MCF 10A (cell line): ENCODE measurements at regions of chr3 and their contacts with region 1.

Region 1: DNA sequence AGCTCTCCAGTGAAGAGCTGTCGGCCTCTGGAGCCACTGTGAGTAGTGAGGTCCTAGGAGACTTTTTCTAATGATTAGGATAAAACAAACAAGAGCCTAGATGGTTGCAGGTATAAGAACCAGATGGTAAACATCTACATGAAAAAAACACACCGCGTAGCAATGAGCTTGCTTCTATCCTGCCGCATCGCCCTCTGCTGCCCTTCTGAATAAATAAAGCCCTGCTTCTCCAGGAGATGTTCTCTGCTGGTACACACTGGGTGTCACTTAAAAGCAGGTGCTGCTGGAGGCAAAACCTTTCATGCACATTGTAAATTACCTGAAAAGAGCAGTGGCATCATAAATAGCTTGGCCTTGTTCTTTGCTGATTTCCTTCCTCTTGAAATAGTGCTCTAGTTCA is 164.4 kb upstream of the TOPAZ1 start:
- DNase-seq: peak; percentile 7
- H3K4me3 Mint-ChIP-seq: no peak overlapping the region
- H3K27ac Mint-ChIP-seq: no peak overlapping the region
- H3K4me1 Mint-ChIP-seq: no peaks in the 10 kb centered on the region
- H3K27me3 Mint-ChIP-seq: no peaks in the 10 kb centered on the region
- CTCF ChIP-seq: no peak

Region 2: GRCh38 chr3:43855674-43856299 is 221.5 kb before region 1 on chr3:
- CTCF ChIA-PET with region 1: no interaction called
- POLR2A ChIA-PET with region 1: no interaction called
- intact Hi-C with region 1: loop called (anchors 5 kb)
- DNase-seq: peak; percentile 83
- H3K4me3 Mint-ChIP-seq: no peak overlapping the region
- H3K27ac Mint-ChIP-seq: no peak overlapping the region
- H3K4me1 Mint-ChIP-seq: peaks cover 22% of the 10 kb centered on the region
- H3K27me3 Mint-ChIP-seq: peaks cover 11% of the 10 kb centered on the region
- CTCF ChIP-seq: peak; percentile 43

Region 3: GRCh38 chr3:44104668-44105321 is 27.5 kb after region 1 on chr3:
- CTCF ChIA-PET with region 1: no interaction called
- POLR2A ChIA-PET with region 1: no interaction called
- intact Hi-C with region 1: no loop called
- DNase-seq: peak; percentile 92
- H3K4me3 Mint-ChIP-seq: no peak overlapping the region
- H3K27ac Mint-ChIP-seq: peak overlapping the region; percentile 82
- H3K4me1 Mint-ChIP-seq: peaks cover 20% of the 10 kb centered on the region
- H3K27me3 Mint-ChIP-seq: no peaks in the 10 kb centered on the region
- CTCF ChIP-seq: no peak

Region 4: DNA sequence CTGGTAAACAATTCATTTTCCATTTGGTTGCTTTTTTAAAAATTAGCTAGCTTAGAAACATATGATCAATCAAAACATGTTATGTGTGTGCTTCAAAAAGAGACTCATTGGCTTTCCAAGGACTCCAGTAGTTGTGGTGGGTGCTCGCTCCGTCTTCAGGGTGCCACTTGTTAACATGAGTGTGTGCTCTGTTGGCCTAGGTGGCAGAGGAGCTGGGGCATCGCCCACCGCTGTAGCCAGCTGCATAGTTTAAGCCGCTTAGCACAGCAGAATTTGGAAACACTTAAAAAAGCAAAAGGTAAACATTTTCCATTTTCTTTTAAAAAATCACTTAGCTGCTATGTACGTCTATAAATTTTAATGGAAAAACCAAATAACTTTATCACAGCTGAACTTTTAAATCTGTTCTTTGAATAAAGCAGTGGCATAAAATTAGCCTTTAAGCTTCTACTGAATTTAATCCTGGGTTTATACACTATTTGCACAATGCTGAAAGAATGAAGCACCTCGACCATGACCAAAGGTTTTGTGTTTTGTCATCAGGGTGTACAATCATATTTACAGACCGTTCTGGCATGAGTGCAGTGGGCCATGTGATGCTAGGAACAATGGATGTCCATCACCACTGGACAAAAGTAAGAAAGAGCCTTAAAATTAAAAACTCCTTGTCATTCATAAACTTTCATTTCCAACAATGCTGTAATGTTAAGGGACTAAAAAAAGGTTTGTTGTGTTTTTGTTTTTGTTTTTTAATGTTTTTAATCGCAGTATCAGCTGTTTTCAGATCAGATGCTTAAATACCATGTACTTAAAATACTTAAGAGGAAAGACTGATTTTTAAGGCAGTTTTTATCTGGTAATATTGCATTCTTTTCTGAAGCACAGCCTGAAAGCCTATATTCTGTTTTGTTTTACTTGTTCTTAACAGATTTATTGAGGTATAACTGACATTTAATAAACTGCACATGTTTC is 319.2 kb after region 1 on chr3:
- CTCF ChIA-PET with region 1: no interaction called
- POLR2A ChIA-PET with region 1: no interaction called
- intact Hi-C with region 1: no loop called
- DNase-seq: no peak
- H3K4me3 Mint-ChIP-seq: no peak overlapping the region
- H3K27ac Mint-ChIP-seq: no peak overlapping the region
- H3K4me1 Mint-ChIP-seq: no peaks in the 10 kb centered on the region
- H3K27me3 Mint-ChIP-seq: no peaks in the 10 kb centered on the region
- CTCF ChIP-seq: no peak